Heart right ventricle (tissue), 16 donors: ENCODE measurements at regions of chr15 and their contacts with region 1.

Region 1: GRCh38 chr15:27993996-27994780 is 104.9 kb downstream of the OCA2 start:
- DNase-seq: no peak
- ATAC-seq: no peak
- H3K4me3 ChIP-seq: no peak overlapping the region
- H3K27ac ChIP-seq: no peak overlapping the region
- H3K4me1 ChIP-seq: no peaks in the 10 kb centered on the region
- H3K27me3 ChIP-seq: peaks cover 0 to 12% (median 0%) of the 10 kb centered on the region in 7 donors
- CTCF ChIP-seq: no peak

Region 2: GRCh38 chr15:28033443-28033842 is 39.3 kb after region 1 on chr15:
- intact Hi-C with region 1: loop called in 1 of 10 experiments (anchors 2 kb)
- DNase-seq: no peak
- ATAC-seq: no peak
- H3K4me3 ChIP-seq: no peak overlapping the region
- H3K27ac ChIP-seq: no peak overlapping the region
- H3K4me1 ChIP-seq: no peaks in the 10 kb centered on the region
- H3K27me3 ChIP-seq: peaks cover 0 to 7% (median 0%) of the 10 kb centered on the region in 7 donors
- CTCF ChIP-seq: no peak

Region 3: DNA sequence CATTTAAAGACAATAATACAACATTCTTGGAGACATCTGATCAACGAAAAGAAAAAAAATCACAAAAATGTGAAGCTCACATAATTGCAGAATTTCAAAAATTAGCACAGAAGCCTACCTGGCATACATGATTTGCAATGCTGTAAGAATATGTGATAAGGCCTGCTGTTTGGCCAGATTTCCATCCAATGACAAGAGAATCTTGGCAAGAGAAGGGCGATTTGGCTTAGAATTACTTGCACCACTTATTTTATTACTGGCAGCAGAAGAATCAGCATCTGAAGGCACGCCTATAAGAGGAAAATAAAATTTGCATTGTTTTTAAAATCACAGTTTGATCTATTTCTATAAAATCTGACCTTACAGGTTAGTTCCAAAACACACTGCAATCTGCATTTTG is 175.2 kb after region 1 on chr15:
- intact Hi-C with region 1: no loop called
- DNase-seq: no peak
- ATAC-seq: no peak
- H3K4me3 ChIP-seq: no peak overlapping the region
- H3K27ac ChIP-seq: no peak overlapping the region
- H3K4me1 ChIP-seq: peaks cover 0 to 14% (median 0%) of the 10 kb centered on the region in 9 donors
- H3K27me3 ChIP-seq: no peaks in the 10 kb centered on the region
- CTCF ChIP-seq: no peak